ENCODE measurements at regions of chr9 and their contacts with region 1.

Region 1: DNA sequence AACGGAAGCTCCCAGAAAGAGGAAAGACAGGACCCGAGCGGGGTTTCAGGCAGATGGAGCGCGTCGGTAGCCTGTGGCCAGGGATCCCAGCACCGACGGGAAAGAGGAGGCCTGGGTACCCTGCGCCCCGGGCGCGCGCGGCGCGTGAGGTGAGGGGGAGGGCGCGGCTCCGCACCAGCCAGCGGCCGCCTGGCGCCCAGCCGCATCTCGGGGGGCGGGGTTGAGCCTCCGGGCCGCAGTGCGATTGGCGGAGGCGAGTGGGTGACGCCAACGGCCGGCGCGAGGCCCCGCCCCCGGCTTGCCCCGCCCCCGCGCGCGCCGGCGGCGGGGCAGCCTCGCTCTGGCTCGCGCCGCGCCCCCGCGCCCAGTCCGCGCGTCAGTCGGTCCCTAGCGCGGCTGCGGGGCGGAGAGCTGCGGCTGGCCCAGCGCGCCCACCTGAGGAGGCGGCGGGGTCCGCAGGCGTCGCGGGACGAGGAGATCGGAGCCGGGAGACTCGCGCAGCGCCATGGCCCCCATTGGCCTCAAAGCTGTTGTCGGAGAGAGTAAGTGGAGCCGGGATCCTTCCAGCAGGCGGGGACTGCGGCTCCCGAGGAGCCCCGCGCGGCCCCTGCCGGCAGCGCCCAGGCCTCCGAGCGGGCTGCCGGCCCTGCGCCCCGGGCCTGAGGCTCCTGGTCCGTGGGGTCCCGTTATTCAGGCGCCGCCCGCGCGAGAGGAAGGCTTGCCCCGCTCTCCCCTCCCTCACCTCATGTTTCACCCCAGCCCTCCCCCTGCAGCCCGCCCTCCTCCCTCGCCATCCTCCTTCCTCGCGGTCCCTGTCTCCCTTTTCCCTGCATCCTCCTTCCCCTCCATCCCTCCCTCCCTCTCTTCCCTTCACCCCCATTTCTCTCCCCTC is at the start of gene STXBP1:
- DNase-seq: peak; percentile 98
- H3K4me3 ChIP-seq: peak within 1 kb of the TSS; percentile 83 to 89
- H3K27ac ChIP-seq: peak within 1 kb of the TSS; percentile 57 to 92; a peak in 3 of 4 replicates
- H3K4me1 ChIP-seq: peaks cover 0 to 22% of the 10 kb centered on the region in 2 experiments; a peak in 2 of 4 replicates
- H3K27me3 ChIP-seq: no peaks in the 10 kb centered on the region
- CTCF ChIP-seq: 0 out of 2 replicates have a peak, but pooled peaks have one; percentile 17
- EP300 ChIP-seq: no peak
- RAD21 ChIP-seq: no peak
- polyA plus RNA-seq, gene STXBP1: 33.0 and 44.3 TPM in 2 replicates

Region 2: GRCh38 chr9:127555768-127556397 is 56.3 kb before region 1 on chr9:
- CTCF ChIA-PET with region 1: no interaction called
- POLR2A ChIA-PET with region 1: no interaction called
- DNase-seq: no peak
- H3K4me3 ChIP-seq: peak overlapping the region in 1 of 2 experiments; percentile 50; a peak in 2 of 4 replicates
- H3K27ac ChIP-seq: peak overlapping the region; percentile 65 to 94
- H3K4me1 ChIP-seq: peaks cover 33 to 59% of the 10 kb centered on the region in 2 experiments; a peak in 3 of 4 replicates
- H3K27me3 ChIP-seq: no peaks in the 10 kb centered on the region
- CTCF ChIP-seq: no peak
- EP300 ChIP-seq: no peak; a peak in 1 of 4 replicates
- RAD21 ChIP-seq: no peak

Region 3: DNA sequence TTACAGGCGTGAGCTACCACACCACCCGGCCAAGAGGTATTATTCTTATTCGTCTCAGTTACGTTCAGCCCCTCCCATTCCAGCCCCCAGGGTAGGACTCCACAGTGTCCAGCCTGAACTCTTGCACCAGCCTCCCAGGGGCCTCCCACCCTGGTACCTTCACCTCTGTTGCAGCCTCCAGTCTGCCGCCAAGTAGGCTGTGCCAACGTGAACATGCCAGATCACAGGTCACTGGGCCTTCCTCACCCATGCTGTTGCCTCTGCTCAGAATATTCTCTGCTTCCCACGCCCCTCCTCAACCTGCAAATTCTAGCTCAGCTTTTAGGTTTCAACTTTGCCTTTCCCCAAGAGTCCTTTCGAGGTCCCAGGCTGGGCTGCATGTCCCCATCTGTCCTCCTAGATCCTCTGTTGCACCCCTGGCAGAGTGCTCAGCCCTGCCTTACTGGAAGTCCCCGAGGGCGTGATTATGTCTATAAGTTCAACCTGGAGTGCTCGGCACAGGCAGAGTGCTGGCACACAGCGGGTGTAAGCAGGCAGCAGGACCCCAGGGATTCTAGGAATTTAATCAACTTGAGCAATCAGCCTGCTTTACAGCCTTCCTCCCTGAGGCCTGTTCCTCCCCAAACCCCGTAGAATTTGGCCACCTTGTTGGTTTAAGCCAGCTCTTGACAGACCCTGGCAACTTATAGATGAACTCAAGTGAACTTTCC is 13.2 kb before region 1 on chr9:
- CTCF ChIA-PET with region 1: interaction called, 10 read pairs
- POLR2A ChIA-PET with region 1: no interaction called
- DNase-seq: no peak
- H3K4me3 ChIP-seq: no peak overlapping the region
- H3K27ac ChIP-seq: no peak overlapping the region
- H3K4me1 ChIP-seq: peaks cover 0 to 8% of the 10 kb centered on the region in 2 experiments; a peak in 1 of 4 replicates
- H3K27me3 ChIP-seq: no peaks in the 10 kb centered on the region
- CTCF ChIP-seq: no peak
- EP300 ChIP-seq: no peak
- RAD21 ChIP-seq: no peak

Region 4: GRCh38 chr9:127664667-127665507 is 52.7 kb after region 1 on chr9:
- CTCF ChIA-PET with region 1: interaction called, 8 read pairs
- POLR2A ChIA-PET with region 1: interaction called, 14 read pairs
- DNase-seq: peak; percentile 76
- H3K4me3 ChIP-seq: no peak overlapping the region
- H3K27ac ChIP-seq: peak overlapping the region; percentile 52 to 97; a peak in 3 of 4 replicates
- H3K4me1 ChIP-seq: peaks cover 0 to 64% of the 10 kb centered on the region in 2 experiments; a peak in 2 of 4 replicates
- H3K27me3 ChIP-seq: no peaks in the 10 kb centered on the region
- CTCF ChIP-seq: no peak
- EP300 ChIP-seq: peak in 1 of 2 experiments; percentile 74; a peak in 2 of 4 replicates
- RAD21 ChIP-seq: no peak; the same call in 1 of the 2 replicates

Region 5: DNA sequence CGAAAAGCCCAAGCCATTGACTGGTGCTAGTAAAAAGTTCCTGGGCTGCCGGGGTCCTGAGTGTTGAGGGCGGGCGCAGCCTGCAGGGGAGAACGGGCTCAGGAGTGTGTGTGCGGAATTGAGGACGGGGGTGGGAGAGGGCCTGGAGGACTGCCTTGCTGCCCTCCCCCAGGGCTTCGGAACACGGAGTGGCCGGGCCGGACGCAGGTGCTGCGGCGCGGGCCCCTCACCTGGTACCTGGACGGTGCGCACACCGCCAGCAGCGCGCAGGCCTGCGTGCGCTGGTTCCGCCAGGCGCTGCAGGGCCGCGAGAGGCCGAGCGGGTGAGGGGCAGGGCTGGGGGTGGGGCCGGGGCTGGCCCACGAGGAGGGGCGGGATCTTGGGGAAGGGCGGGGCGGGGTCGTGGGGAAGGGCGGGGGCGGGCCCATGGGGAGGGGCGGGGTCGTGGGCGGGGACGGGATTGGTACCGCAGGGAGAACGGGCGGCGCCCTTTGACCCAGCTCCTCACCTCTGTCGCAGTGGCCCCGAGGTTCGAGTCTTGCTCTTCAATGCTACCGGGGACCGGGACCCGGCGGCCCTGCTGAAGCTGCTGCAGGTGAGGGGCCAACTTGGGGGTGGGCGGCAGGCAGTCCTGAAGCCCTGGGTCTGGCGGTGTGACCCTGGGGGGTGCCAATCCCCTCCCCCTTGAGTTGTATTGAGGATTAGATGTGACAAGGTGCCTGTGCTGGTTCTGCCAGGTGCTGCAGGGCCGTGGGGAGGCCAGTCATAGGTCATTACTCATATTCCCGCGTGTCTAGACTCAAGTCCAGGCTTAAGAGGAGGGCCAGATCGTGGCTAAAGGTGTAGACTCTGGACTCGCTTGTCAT is 197.6 kb after region 1 on chr9:
- CTCF ChIA-PET with region 1: no interaction called
- POLR2A ChIA-PET with region 1: no interaction called
- DNase-seq: peak; percentile 89
- H3K4me3 ChIP-seq: no peak overlapping the region
- H3K27ac ChIP-seq: no peak overlapping the region
- H3K4me1 ChIP-seq: peaks cover 0 to 12% of the 10 kb centered on the region in 2 experiments; a peak in 1 of 4 replicates
- H3K27me3 ChIP-seq: no peaks in the 10 kb centered on the region
- CTCF ChIP-seq: no peak
- EP300 ChIP-seq: no peak
- RAD21 ChIP-seq: no peak